CD8-positive, alpha-beta T cell (primary cell): ENCODE measurements at regions of chr18 and their contacts with region 1.

Region 1: DNA sequence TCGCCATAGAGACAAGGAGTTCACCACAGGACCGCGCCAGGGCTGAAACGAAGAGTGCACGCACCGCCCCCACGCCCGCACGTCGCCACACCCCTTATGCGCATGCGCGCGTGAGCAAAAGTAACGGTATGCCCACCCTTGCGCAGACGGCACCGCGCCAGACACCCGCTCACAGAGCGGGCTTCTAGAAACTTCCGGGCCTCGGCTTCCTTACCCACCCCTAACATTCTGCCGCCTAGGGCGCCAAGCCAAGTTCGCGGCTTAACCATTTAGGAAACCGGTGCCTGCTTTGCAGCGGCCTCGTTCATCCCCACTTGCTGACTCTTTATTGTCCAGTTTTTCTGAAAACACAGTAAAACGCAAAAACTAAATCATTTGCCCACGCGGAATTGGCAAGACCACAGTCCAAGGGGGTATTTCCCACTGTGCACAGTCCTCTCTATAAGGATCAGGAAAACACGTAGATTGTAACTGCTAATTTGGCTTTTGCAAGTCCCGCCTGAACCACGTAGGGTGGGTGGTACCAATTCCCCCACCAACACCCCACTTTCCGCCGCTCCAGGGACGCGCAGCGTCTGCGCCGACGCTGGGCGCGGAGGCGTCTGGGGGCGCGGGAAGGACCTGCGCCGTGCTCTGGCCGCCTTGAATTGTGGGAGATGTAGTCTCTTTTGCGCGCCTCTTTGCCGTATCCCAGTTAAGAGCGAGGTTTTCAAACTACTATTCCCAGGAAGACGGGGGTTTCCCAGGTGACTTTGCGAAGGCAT is at the starts of genes FBXO15 and TIMM21:
- DNase-seq: peak; percentile 89 to 99 (median 96)
- ATAC-seq: peak; percentile 83
- H3K4me3 ChIP-seq: peak within 1 kb of the TSS; percentile 84 to 91
- H3K4me3 Mint-ChIP-seq: peak within 1 kb of the TSS; percentile 90
- H3K27ac ChIP-seq: peak within 1 kb of the TSS; percentile 92 to 99
- H3K27ac Mint-ChIP-seq: peak within 1 kb of the TSS; percentile 92
- H3K4me1 ChIP-seq: peaks cover 21% of the 10 kb centered on the region
- H3K4me1 Mint-ChIP-seq: peaks cover 53% of the 10 kb centered on the region
- H3K27me3 ChIP-seq: no peaks in the 10 kb centered on the region
- H3K27me3 Mint-ChIP-seq: no peaks in the 10 kb centered on the region
- CTCF ChIP-seq: no peak
- total RNA-seq, gene FBXO15: 1.0 to 1.3 TPM
- total RNA-seq, gene TIMM21: 20.2 to 20.8 TPM

Region 2: DNA sequence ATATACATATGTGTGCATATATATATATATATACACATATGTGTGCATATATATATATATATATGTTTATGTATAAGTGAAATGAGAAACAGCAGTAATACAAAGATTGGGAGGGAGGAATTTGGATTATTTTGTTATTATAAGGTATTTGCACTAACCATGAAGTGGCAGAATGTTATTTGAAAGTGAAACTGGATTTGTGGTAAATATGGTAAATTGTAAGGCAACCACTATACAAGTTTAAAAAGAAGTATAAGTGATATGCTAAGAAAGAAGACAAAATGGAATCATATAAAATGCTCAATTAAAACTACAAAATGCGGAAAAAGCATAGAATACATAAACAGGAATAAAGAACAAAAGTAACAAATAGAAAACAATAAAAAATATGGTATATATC is 37.8 kb before region 1 on chr18:
- CTCF ChIA-PET with region 1: no interaction called
- POLR2A ChIA-PET with region 1: no interaction called
- intact Hi-C with region 1: no loop called
- DNase-seq: no peak
- ATAC-seq: no peak
- H3K4me3 ChIP-seq: no peak overlapping the region
- H3K4me3 Mint-ChIP-seq: no peak overlapping the region
- H3K27ac ChIP-seq: no peak overlapping the region
- H3K27ac Mint-ChIP-seq: no peak overlapping the region
- H3K4me1 ChIP-seq: no peaks in the 10 kb centered on the region
- H3K4me1 Mint-ChIP-seq: peaks cover 13% of the 10 kb centered on the region
- H3K27me3 ChIP-seq: no peaks in the 10 kb centered on the region
- H3K27me3 Mint-ChIP-seq: no peaks in the 10 kb centered on the region
- CTCF ChIP-seq: no peak

Region 3: GRCh38 chr18:74196220-74197119 is 48.5 kb after region 1 on chr18:
- CTCF ChIA-PET with region 1: no interaction called
- POLR2A ChIA-PET with region 1: no interaction called
- intact Hi-C with region 1: loop called in 1 of 2 experiments (anchors 1 kb)
- DNase-seq: peak; percentile 8 to 86 (median 46)
- ATAC-seq: peak; percentile 98
- H3K4me3 ChIP-seq: peak overlapping the region; percentile 21 to 42
- H3K4me3 Mint-ChIP-seq: peak overlapping the region; percentile 79
- H3K27ac ChIP-seq: no peak overlapping the region
- H3K27ac Mint-ChIP-seq: peak overlapping the region; percentile 85
- H3K4me1 ChIP-seq: peaks cover 4% of the 10 kb centered on the region
- H3K4me1 Mint-ChIP-seq: peaks cover 6% of the 10 kb centered on the region
- H3K27me3 ChIP-seq: no peaks in the 10 kb centered on the region
- H3K27me3 Mint-ChIP-seq: peaks cover 18% of the 10 kb centered on the region
- CTCF ChIP-seq: peak; percentile 89

Region 4: GRCh38 chr18:74281639-74282358 is 133.8 kb after region 1 on chr18:
- CTCF ChIA-PET with region 1: no interaction called
- POLR2A ChIA-PET with region 1: no interaction called
- intact Hi-C with region 1: no loop called
- DNase-seq: no peak
- ATAC-seq: no peak
- H3K4me3 ChIP-seq: no peak overlapping the region
- H3K4me3 Mint-ChIP-seq: no peak overlapping the region
- H3K27ac ChIP-seq: no peak overlapping the region
- H3K27ac Mint-ChIP-seq: peak overlapping the region; percentile 6
- H3K4me1 ChIP-seq: peaks cover 13% of the 10 kb centered on the region
- H3K4me1 Mint-ChIP-seq: peaks cover 28% of the 10 kb centered on the region
- H3K27me3 ChIP-seq: no peaks in the 10 kb centered on the region
- H3K27me3 Mint-ChIP-seq: no peaks in the 10 kb centered on the region
- CTCF ChIP-seq: no peak

Region 5: GRCh38 chr18:74291771-74292540 is 144.0 kb after region 1 on chr18 and contains the start of gene CYB5A:
- CTCF ChIA-PET with region 1: no interaction called
- POLR2A ChIA-PET with region 1: no interaction called
- intact Hi-C with region 1: loop called (anchors 1 to 2 kb)
- DNase-seq: peak; percentile 98 to 99 (median 99)
- ATAC-seq: peak; percentile 94
- H3K4me3 ChIP-seq: peak within 1 kb of the TSS; percentile 85 to 100
- H3K4me3 Mint-ChIP-seq: no peak within 1 kb of the TSS
- H3K27ac ChIP-seq: peak within 1 kb of the TSS; percentile 44 to 61
- H3K27ac Mint-ChIP-seq: peak within 1 kb of the TSS; percentile 86
- H3K4me1 ChIP-seq: peaks cover 8% of the 10 kb centered on the region
- H3K4me1 Mint-ChIP-seq: peaks cover 21% of the 10 kb centered on the region
- H3K27me3 ChIP-seq: no peaks in the 10 kb centered on the region
- H3K27me3 Mint-ChIP-seq: no peaks in the 10 kb centered on the region
- CTCF ChIP-seq: peak; percentile 4
- total RNA-seq, gene CYB5A: 4.4 to 5.9 TPM

Region 6: GRCh38 chr18:74370115-74370514 is 222.2 kb after region 1 on chr18:
- CTCF ChIA-PET with region 1: no interaction called
- POLR2A ChIA-PET with region 1: no interaction called
- intact Hi-C with region 1: loop called in 1 of 2 experiments (anchors 1 kb)
- DNase-seq: no peak
- ATAC-seq: no peak
- H3K4me3 ChIP-seq: no peak overlapping the region
- H3K4me3 Mint-ChIP-seq: no peak overlapping the region
- H3K27ac ChIP-seq: no peak overlapping the region
- H3K27ac Mint-ChIP-seq: no peak overlapping the region
- H3K4me1 ChIP-seq: peaks cover 55% of the 10 kb centered on the region
- H3K4me1 Mint-ChIP-seq: peaks cover 56% of the 10 kb centered on the region
- H3K27me3 ChIP-seq: peaks cover 0 to 3% of the 10 kb centered on the region in 2 experiments
- H3K27me3 Mint-ChIP-seq: peaks cover 2% of the 10 kb centered on the region
- CTCF ChIP-seq: no peak